ENCODE measurements at regions of chr1 and their contacts with region 1.

Region 1: GRCh38 chr1:193031438-193031837 is 27.7 kb downstream of the UCHL5 start:
- DNase-seq: no peak
- H3K4me3 ChIP-seq: no peak overlapping the region
- H3K27ac ChIP-seq: no peak overlapping the region
- H3K4me1 ChIP-seq: no peaks in the 10 kb centered on the region
- H3K27me3 ChIP-seq: no peaks in the 10 kb centered on the region
- CTCF ChIP-seq: peak; percentile 59

Region 2: DNA sequence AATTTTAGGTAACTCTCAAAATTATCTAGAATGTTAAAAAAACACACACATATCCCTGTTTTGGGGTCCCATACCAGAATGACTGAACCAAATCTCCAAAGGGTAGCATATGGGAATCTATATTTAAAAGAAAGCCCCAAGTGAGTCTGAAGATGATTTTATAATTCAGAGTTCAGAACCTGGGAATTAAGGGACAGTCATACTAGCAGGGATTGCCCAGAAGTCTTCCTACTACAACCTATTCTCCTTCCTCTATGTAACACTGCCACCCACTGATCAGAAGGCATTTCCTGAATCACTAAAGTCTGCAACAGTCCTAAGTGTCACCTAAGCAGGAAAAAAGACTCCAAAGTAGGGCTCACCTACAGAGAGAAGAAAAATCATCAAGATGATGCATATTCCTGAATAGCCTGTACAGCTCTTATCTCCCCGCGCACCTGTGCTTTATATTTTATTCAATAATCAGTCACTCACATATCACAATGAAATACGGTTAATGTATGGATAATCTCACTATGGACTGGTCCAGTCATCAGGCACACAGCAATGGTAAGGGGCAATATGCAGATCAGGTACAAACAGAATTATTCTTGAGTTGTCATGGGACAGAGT is 451.0 kb before region 1 on chr1:
- CTCF ChIA-PET with region 1: no interaction called
- POLR2A ChIA-PET with region 1: no interaction called
- intact Hi-C with region 1: loop called (anchors 10 kb)
- DNase-seq: peak in 1 of 2 experiments; percentile 30
- H3K4me3 ChIP-seq: no peak overlapping the region
- H3K27ac ChIP-seq: no peak overlapping the region
- H3K4me1 ChIP-seq: no peaks in the 10 kb centered on the region
- H3K27me3 ChIP-seq: no peaks in the 10 kb centered on the region
- CTCF ChIP-seq: peak; percentile 53

Region 3: DNA sequence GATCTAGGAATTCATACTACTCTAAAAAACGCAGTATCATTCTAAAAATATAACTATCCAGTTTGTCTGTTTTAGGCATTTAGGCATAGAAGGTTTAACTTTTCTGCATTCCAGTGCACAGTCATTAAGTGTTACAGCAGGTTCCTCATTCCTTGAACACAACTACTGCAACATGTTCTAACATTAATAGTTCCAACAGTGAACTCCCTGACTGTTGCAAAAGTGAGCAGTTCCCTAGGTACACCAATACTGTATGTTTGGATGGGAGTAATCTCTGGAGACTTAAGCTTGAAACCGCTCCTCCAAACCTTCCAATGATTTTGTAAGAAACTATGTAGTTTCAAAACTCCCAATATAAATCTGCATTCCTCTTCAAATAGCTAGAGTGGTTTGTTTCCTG is 18.4 kb before region 1 on chr1:
- CTCF ChIA-PET with region 1: no interaction called
- POLR2A ChIA-PET with region 1: no interaction called
- intact Hi-C with region 1: no loop called
- DNase-seq: no peak
- H3K4me3 ChIP-seq: no peak overlapping the region
- H3K27ac ChIP-seq: no peak overlapping the region
- H3K4me1 ChIP-seq: no peaks in the 10 kb centered on the region
- H3K27me3 ChIP-seq: no peaks in the 10 kb centered on the region
- CTCF ChIP-seq: no peak

Measured in PC-9 (cell line).